SK-N-SH (cell line): ENCODE measurements at regions of chr16 and their contacts with region 1.

Region 1: DNA sequence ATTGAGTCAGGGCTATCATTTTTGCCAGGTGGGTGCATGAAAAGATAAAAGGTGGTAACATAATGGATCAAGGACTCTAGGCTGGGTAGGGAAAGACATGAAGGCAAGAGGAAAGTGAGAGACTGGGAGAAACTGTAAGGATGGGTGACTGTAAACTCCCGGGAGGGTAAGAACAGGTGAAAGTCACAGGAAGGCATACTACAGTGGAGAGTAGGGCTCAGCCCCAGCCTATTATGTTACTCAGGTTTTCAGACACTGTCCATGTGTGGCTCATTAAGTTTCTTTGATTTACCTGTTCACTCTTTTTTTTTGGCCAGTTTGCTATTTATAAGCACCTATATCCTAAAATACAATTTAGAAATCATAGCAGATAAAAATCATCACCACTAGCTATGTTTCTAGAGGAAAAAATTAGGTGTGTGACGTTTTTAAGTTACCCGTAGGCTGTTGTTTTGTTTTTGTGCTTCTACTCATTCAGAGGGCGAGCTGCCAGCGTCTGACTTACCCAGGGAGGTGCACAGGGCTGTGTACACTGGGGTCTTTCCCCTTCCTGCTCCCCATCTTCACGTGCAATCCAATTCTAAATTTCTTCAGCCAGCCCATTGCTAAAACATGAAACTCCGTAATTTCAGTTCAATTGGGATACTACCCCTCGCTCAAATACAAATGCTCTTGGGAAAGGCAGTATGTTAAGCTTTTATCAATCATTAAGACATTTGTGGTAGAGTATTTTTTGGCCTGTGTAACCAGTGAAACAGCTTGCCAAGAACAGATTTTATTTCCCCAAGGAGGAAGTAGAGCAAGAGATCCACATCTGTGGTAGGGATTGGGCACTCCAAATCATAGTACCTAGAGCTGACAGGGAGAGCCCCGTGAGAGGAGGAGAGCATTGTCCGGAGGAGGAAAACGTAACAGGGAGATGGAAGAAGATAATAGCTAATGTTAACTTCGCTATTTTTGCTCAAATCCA is 21.7 kb upstream of the VWA3A start:
- DNase-seq: no peak
- H3K4me3 ChIP-seq: no peak overlapping the region
- H3K27ac ChIP-seq: no peak overlapping the region
- H3K4me1 ChIP-seq: peaks cover 0 to 9% of the 10 kb centered on the region in 2 experiments; a peak in 1 of 4 replicates
- H3K27me3 ChIP-seq: no peaks in the 10 kb centered on the region
- CTCF ChIP-seq: no peak
- EP300 ChIP-seq: no peak
- RAD21 ChIP-seq: no peak

Region 2: GRCh38 chr16:22001591-22001990 is 69.1 kb before region 1 on chr16:
- CTCF ChIA-PET with region 1: interaction called, 209 read pairs
- POLR2A ChIA-PET with region 1: no interaction called
- DNase-seq: no peak
- H3K4me3 ChIP-seq: no peak overlapping the region
- H3K27ac ChIP-seq: no peak overlapping the region
- H3K4me1 ChIP-seq: peaks cover 0 to 4% of the 10 kb centered on the region in 2 experiments; a peak in 1 of 4 replicates
- H3K27me3 ChIP-seq: no peaks in the 10 kb centered on the region
- CTCF ChIP-seq: no peak
- EP300 ChIP-seq: no peak
- RAD21 ChIP-seq: no peak